A549 (cell line): ENCODE measurements at regions of chr16 and their contacts with region 1.

Region 1: DNA sequence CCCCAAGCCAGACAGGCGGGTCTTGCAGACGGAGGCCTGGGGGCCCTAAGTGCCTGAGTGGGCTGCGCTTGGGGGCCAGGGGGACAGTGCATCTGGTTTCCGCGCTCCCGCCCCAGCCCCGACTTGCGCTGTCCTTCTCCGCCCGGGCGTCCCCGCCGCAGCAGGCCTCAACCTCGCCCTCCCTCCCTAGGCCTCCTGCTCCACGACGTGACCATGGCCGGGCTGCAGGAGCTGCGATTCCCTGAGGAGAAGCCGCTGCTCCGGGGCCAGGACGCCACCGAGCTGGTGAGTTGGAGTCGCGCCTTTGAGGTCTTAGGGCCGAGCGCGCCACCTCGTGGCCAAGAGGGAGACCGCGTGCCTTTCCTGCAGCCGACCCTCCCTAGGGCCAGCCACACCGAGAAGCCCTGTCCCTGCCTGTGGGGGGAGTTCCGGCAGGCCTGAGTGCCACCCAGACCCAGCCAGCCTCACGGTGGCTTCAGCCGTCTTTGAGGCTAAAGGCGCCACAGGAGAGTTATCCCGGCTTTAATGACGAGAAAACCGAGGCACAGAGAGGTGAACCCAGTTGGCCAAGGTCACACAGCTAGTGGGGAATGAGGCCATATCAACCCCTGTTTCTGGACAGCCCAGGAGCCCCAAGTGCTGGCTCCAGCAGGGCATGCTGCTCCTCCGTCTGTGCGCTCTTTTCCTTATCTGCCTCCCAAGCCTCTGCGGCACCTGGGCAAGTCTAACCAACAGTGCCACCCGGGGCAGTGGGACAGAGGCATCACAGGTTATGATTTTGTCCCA is 12.2 kb upstream of the NDRG4 start:
- DNase-seq: peak; percentile 87 to 88
- ATAC-seq: peak; percentile 89 to 98
- H3K4me3 ChIP-seq: no peak overlapping the region
- H3K27ac ChIP-seq: peak overlapping the region in 1 of 2 experiments; percentile 65; a peak in 2 of 6 replicates
- H3K4me1 ChIP-seq: 0 out of 3 replicates have a peak, but pooled peaks cover 2% of the 10 kb centered on the region
- CTCF ChIP-seq: peak; percentile 86
- EP300 ChIP-seq: no peak
- POLR2A ChIP-seq: no peak
- RAD21 ChIP-seq: peak; percentile 95 to 97

Region 2: DNA sequence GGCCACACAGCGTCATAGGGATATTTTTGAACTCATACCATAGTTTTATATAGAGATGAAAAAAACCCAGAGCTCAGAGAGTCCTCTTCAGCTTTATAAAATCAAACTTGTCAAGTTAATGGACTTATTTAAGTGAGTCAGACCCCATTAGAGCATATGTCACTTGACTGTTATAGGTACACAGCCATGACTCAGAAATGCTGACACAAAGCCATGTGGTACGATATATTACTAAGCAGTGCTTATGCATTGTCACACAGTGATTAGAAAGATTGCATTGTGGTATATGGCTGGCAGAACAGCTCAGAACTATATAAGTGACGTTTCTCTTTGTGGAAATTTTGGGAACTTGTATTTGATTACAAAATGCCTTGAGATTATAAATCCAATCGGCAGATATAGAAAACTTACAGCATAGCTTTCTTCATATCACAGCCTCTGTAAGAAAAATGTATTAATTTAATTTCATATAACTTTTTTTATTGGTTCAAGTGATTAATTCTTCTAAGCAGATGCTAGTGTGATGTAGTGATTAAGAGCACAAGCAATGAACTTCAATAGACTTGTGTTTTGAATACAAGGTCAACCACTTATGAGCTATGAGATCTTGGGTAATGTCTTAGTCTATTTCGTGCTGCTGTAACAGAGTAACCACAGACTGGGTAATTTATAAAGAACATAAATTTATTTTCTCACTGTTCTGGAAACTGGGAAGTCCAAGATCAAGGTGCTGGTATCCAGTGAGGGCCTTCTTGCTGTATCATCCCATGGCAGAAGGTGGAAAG is 121.3 kb before region 1 on chr16:
- CTCF ChIA-PET with region 1: interaction called, 26 read pairs
- POLR2A ChIA-PET with region 1: no interaction called
- DNase-seq: peak; percentile 21 to 40
- ATAC-seq: peak; percentile 68 to 88; a peak in 4 of 6 replicates
- H3K4me3 ChIP-seq: no peak overlapping the region
- H3K27ac ChIP-seq: no peak overlapping the region
- H3K4me1 ChIP-seq: peaks cover 3% of the 10 kb centered on the region; the same call in 1 of the 3 replicates
- CTCF ChIP-seq: no peak
- EP300 ChIP-seq: no peak
- POLR2A ChIP-seq: no peak
- RAD21 ChIP-seq: no peak

Region 3: DNA sequence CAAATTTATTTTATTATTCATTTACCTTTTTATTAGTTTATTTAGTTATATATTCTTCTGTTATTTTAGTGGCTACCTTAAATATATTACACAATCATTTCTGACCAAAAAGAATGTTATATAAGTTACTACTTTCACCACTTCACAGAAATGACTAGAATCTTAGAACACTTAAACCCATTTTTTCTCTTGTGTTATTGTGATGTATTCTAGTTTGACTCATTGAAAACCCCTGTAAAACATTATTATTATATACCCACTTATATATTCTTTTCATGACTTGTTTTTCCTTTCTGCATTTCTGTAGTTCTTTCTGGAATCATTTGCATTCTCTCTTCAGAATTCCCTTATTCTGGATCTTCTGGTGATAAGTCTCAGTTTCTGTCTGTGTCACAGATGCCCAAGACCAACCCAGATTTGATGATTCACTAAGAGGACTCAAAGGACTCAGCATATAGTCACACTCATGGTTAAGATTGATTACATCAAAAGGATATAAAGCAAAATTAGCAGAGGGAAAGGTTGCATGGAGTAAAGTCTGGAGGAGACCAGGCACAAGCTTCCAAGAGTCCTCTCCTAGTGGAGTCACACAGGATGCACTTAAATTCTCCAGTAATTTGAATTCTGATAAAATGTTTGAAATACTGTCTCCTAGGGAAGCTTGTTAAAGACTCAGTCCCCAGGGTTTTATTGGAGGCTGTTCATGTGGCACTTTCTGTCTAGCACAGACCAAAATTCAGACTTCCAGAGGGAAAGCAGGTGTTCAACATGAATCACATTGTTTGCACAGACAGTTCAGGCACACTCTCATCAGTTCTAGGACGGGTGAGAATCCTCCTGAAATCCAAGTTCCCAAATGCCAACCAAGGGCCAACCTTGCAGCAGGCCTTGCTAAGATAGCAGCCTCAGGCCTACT is 87.8 kb before region 1 on chr16:
- CTCF ChIA-PET with region 1: interaction called, 14 read pairs
- POLR2A ChIA-PET with region 1: no interaction called
- DNase-seq: peak in 1 of 2 experiments; percentile 46
- ATAC-seq: peak; percentile 64 to 76
- H3K4me3 ChIP-seq: no peak overlapping the region
- H3K27ac ChIP-seq: peak overlapping the region; percentile 24 to 44; a peak in 4 of 6 replicates
- H3K4me1 ChIP-seq: peaks cover 21% of the 10 kb centered on the region
- CTCF ChIP-seq: no peak
- EP300 ChIP-seq: no peak
- POLR2A ChIP-seq: no peak
- RAD21 ChIP-seq: no peak

Region 4: GRCh38 chr16:58451945-58452401 is 35.8 kb before region 1 on chr16:
- CTCF ChIA-PET with region 1: interaction called, 25 read pairs
- POLR2A ChIA-PET with region 1: no interaction called
- DNase-seq: peak; percentile 32 to 90
- ATAC-seq: peak; percentile 88 to 90
- H3K4me3 ChIP-seq: no peak overlapping the region
- H3K27ac ChIP-seq: peak overlapping the region; percentile 61 to 79
- H3K4me1 ChIP-seq: peaks cover 45% of the 10 kb centered on the region
- CTCF ChIP-seq: peak; percentile 33; the same call in 2 of the 3 replicates
- EP300 ChIP-seq: no peak
- POLR2A ChIP-seq: no peak
- RAD21 ChIP-seq: peak; percentile 32 to 33; a peak in 3 of 5 replicates

Region 5: DNA sequence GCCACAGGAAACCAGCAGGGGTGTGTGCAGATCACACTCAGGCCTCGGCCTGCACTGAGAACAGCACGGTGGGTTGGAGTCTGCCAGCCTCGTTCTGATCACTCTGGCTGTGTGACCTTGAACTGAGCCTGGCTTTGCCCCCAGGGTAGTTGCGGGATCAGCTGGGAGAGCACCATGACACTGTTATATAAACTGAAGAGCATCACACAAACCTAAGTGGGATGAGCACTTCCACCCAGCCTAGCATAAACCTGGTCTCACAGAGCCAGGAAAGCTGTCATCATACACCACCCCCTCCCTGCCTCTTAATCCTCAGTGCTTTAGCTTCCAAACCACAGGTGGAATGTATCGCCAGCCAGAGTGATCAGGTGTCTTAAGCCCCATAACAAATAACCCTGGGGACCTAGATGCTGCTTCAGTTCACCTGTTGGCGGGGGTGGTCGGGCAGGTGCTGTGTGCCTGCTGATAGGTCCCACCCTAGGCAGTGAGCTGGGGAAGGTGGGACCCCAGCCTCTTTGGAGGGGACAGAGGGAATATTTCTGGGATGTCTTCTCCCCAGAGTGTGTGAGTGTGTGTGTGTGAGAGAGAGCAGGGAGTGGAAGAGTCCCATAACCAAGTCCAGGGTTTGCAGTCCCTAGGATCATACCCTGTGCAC is 16.3 kb before region 1 on chr16:
- CTCF ChIA-PET with region 1: interaction called, 23 read pairs
- POLR2A ChIA-PET with region 1: interaction called, 3 read pairs
- DNase-seq: no peak
- ATAC-seq: no peak; a peak in 1 of 6 replicates
- H3K4me3 ChIP-seq: no peak overlapping the region
- H3K27ac ChIP-seq: no peak overlapping the region
- H3K4me1 ChIP-seq: no peaks in the 10 kb centered on the region
- CTCF ChIP-seq: no peak
- EP300 ChIP-seq: no peak
- POLR2A ChIP-seq: no peak
- RAD21 ChIP-seq: no peak

Region 6: DNA sequence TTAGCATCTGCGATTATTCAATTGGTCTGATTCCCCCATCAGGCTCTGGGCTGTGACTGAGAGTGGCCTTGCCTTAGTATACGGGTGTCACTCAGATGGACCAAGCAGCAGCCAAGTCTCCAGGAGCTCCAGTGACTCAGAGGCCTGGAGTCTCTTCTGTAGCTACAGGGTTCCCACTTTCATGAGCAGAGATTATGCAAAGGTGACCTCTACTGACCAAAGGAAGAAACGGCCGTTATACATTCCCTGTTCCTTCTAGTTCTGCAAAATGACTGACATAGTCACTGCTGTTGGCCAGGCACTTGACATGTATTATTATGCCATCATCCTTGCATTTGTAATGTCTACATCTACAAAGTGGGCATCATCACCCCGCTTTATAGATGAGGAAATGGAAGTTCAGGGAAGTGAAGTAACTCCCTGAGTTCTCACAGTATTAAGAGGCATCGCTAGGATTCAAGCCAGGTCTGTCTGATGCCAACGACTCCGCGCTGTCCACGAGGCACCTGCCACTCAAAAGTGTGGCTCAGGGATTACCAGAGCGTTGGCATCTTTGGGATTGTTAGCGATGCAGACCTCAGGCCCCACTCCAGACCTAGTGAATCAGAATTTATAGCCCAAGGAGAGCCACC is 173.6 kb after region 1 on chr16:
- CTCF ChIA-PET with region 1: interaction called, 12 read pairs
- POLR2A ChIA-PET with region 1: no interaction called
- DNase-seq: peak; percentile 87 to 94
- ATAC-seq: peak; percentile 96 to 98
- H3K4me3 ChIP-seq: no peak overlapping the region
- H3K27ac ChIP-seq: no peak overlapping the region
- H3K4me1 ChIP-seq: peaks cover 3% of the 10 kb centered on the region; the same call in 1 of the 3 replicates
- CTCF ChIP-seq: peak; percentile 87
- EP300 ChIP-seq: no peak
- POLR2A ChIP-seq: no peak
- RAD21 ChIP-seq: peak; percentile 88 to 92